OCI-LY7 (cell line): ENCODE measurements at regions of chr11 and their contacts with region 1.

Region 1: DNA sequence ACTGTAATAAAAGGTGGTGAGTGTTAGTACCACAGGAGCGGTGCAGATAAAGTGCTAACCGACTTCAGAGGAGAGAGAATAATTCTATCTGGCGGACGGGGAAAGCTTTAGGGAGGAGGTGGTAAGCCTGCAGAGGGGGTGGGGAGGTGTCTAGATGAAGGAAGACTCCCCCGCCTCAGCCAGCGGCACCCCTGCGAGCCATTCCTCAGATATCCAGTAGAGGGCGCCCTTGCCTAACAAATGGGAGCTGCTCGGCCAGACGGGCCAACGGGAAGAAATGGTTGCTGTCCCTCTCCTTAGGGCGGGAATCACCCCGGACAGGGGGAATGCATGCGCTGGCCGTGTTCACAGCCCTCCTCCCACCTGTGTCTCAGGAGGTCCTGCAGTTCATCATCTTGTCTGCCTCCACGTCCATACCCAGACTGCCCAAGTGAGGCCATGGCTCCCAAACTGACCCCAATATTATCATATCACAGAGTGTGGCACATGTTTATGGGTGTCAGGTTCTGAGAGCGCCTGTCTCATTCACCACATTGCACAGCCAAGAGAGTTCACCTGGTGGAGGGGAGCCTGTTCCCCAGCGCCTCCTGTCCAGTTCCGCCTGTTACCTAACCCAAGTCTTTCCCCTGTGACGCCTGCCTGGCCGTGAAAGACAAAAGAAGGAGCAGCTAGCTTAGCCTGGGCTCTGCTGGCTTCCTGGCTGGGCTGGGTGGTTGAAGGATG is 85.5 kb downstream of the ST3GAL4 start:
- DNase-seq: peak; percentile 75
- H3K4me3 ChIP-seq: no peak overlapping the region
- H3K27ac ChIP-seq: no peak overlapping the region
- H3K4me1 ChIP-seq: peaks cover 32% of the 10 kb centered on the region
- CTCF ChIP-seq: peak; percentile 95

Region 2: DNA sequence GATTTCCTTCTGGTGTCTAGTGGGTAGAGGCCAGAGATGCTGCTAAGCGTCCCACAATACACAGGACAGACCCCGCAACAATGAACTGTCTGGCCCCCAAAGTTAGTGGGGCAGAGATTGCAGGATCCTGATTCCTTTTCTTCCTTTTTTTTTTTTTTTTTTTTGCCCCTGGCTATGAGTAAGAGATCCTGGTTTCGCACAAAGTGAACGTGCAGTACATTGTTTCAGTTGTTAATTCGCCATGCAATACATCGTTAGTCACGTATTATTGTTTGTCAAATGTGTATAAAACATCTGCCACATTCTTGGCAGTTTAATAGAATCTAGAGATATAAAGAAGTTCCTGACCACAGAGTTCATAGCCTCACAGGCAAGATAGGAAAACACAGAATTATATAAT is 65.2 kb before region 1 on chr11:
- CTCF ChIA-PET with region 1: no interaction called
- POLR2A ChIA-PET with region 1: no interaction called
- intact Hi-C with region 1: no loop called
- DNase-seq: no peak
- H3K4me3 ChIP-seq: no peak overlapping the region
- H3K27ac ChIP-seq: no peak overlapping the region
- H3K4me1 ChIP-seq: no peaks in the 10 kb centered on the region
- CTCF ChIP-seq: no peak

Region 3: GRCh38 chr11:126465573-126466188 is 24.7 kb after region 1 on chr11:
- CTCF ChIA-PET with region 1: interaction called, 6 read pairs
- POLR2A ChIA-PET with region 1: interaction called, 8 read pairs
- intact Hi-C with region 1: loop called (anchors 1 kb)
- DNase-seq: peak; percentile 90
- H3K4me3 ChIP-seq: peak overlapping the region; percentile 57
- H3K27ac ChIP-seq: peak overlapping the region; percentile 89
- H3K4me1 ChIP-seq: peaks cover 45% of the 10 kb centered on the region
- CTCF ChIP-seq: no peak

Region 4: GRCh38 chr11:126533560-126533959 is 92.6 kb after region 1 on chr11:
- CTCF ChIA-PET with region 1: no interaction called
- POLR2A ChIA-PET with region 1: no interaction called
- intact Hi-C with region 1: loop called (anchors 2 kb)
- DNase-seq: no peak
- H3K4me3 ChIP-seq: no peak overlapping the region
- H3K27ac ChIP-seq: no peak overlapping the region
- H3K4me1 ChIP-seq: no peaks in the 10 kb centered on the region
- CTCF ChIP-seq: peak; percentile 30; the same call in 1 of the 2 replicates

Region 5: DNA sequence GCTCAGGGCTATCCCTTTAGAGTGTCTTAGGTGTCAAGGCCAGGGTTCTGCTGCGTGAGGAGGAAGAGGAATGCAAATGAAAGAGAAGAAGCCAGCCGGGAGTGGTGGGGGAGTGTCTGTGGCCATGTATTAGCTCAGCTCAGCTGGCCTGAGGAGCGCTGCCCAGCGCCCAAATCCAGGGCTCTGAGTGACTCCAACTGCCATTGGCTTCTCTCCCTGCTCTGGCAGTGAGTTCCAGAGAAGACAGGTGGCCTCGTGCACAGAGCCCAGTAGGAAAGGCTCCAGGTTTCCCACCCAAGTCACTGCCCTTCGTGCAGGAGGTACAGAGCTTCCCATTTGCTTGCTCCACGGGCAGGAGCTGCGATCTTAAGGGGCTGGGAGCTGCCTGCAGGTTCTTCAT is 257.6 kb after region 1 on chr11:
- CTCF ChIA-PET with region 1: no interaction called
- POLR2A ChIA-PET with region 1: no interaction called
- intact Hi-C with region 1: loop called (anchors 10 kb)
- DNase-seq: no peak
- H3K4me3 ChIP-seq: no peak overlapping the region
- H3K27ac ChIP-seq: no peak overlapping the region
- H3K4me1 ChIP-seq: no peaks in the 10 kb centered on the region
- CTCF ChIP-seq: no peak

Region 6: DNA sequence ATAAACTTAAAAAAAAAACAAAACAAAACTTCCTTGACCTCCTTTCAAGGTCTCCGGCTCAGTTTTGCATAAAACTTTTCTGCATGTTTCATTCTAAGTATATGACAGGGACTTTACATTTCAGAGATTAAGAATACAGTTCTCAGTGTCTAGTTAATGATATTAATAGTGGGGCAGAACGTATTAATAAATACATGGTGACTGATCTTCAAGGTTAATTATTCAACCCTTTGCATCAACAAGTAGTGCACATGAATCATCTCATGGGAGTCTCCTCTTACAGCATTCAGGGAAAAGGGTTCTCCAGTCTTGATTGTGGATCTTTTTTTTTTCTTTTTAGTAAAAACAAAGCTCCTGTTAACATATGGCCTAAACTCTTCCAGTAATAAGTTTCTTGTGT is 412.8 kb after region 1 on chr11:
- CTCF ChIA-PET with region 1: no interaction called
- POLR2A ChIA-PET with region 1: no interaction called
- intact Hi-C with region 1: no loop called
- DNase-seq: no peak
- H3K4me3 ChIP-seq: no peak overlapping the region
- H3K27ac ChIP-seq: no peak overlapping the region
- H3K4me1 ChIP-seq: no peaks in the 10 kb centered on the region
- CTCF ChIP-seq: no peak

Region 7: GRCh38 chr11:127074151-127074761 is 633.3 kb after region 1 on chr11:
- CTCF ChIA-PET with region 1: no interaction called
- POLR2A ChIA-PET with region 1: no interaction called
- intact Hi-C with region 1: loop called (anchors 1 kb)
- DNase-seq: peak; percentile 77
- H3K4me3 ChIP-seq: peak overlapping the region; percentile 32
- H3K27ac ChIP-seq: peak overlapping the region; percentile 53
- H3K4me1 ChIP-seq: peaks cover 19% of the 10 kb centered on the region
- CTCF ChIP-seq: peak; percentile 76